CD4-positive, alpha-beta T cell (primary cell): ENCODE measurements at regions of chr18 and their contacts with region 1.

Region 1: DNA sequence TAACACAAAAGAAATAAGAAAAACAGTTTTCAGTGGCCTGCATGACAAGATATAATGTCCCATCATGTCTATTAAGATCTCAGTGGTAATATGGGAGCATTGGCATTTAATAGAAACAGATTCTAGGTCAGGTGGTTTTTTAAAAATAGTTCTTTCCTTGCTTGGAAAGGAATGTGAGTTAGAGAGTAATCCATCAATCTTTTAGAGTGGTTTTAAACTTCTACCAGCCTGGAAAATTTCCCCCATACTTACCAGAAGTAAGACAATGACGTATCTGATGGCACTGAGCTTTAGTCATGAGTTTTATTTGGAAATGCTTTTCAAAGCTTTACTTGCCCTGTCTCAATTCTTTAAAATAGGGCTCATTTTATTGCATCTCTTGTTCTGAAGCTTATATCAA is 441.7 kb upstream of the SMIM21 start:
- DNase-seq: no peak
- ATAC-seq: no peak
- H3K4me3 ChIP-seq: no peak overlapping the region
- H3K4me3 Mint-ChIP-seq: no peak overlapping the region
- H3K27ac ChIP-seq: no peak overlapping the region
- H3K27ac Mint-ChIP-seq: no peak overlapping the region
- H3K4me1 ChIP-seq: no peaks in the 10 kb centered on the region
- H3K4me1 Mint-ChIP-seq: no peaks in the 10 kb centered on the region
- H3K27me3 ChIP-seq: no peaks in the 10 kb centered on the region
- H3K27me3 Mint-ChIP-seq: peaks cover 23% of the 10 kb centered on the region
- CTCF ChIP-seq: no peak

Region 2: DNA sequence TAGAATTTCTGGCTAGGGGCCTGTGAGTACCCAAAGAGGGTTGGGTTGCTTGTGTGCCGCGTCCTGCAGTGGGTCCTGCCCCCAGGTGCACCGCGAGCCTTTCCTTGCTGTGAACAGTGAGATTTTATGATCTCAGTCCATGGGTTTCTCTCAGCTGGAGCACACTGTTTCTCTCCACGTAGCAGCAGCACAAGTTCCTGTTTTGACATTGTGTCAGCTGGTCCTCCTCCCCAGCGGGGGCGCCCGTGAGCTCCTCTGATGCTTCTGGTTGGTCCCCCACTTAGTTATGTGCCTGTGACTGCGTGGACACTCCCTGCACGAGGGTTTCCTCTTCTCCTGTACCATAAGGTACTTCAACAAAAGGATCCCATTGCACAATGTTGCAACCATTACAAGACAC is 628.7 kb before region 1 on chr18:
- CTCF ChIA-PET with region 1: no interaction called
- POLR2A ChIA-PET with region 1: no interaction called
- intact Hi-C with region 1: no loop called
- DNase-seq: no peak
- ATAC-seq: peak; percentile 24
- H3K4me3 ChIP-seq: no peak overlapping the region
- H3K4me3 Mint-ChIP-seq: no peak overlapping the region
- H3K27ac ChIP-seq: no peak overlapping the region
- H3K27ac Mint-ChIP-seq: no peak overlapping the region
- H3K4me1 ChIP-seq: peaks cover 27% of the 10 kb centered on the region
- H3K4me1 Mint-ChIP-seq: peaks cover 71% of the 10 kb centered on the region
- H3K27me3 ChIP-seq: no peaks in the 10 kb centered on the region
- H3K27me3 Mint-ChIP-seq: no peaks in the 10 kb centered on the region
- CTCF ChIP-seq: no peak

Region 3: GRCh38 chr18:75827751-75828287 is 41.3 kb before region 1 on chr18:
- CTCF ChIA-PET with region 1: no interaction called
- POLR2A ChIA-PET with region 1: no interaction called
- intact Hi-C with region 1: loop called in 1 of 2 experiments (anchors 2 kb)
- DNase-seq: no peak
- ATAC-seq: no peak
- H3K4me3 ChIP-seq: no peak overlapping the region
- H3K4me3 Mint-ChIP-seq: no peak overlapping the region
- H3K27ac ChIP-seq: no peak overlapping the region
- H3K27ac Mint-ChIP-seq: no peak overlapping the region
- H3K4me1 ChIP-seq: no peaks in the 10 kb centered on the region
- H3K4me1 Mint-ChIP-seq: no peaks in the 10 kb centered on the region
- H3K27me3 ChIP-seq: no peaks in the 10 kb centered on the region
- H3K27me3 Mint-ChIP-seq: peaks cover 4% of the 10 kb centered on the region
- CTCF ChIP-seq: no peak